Activated CD4-positive, alpha-beta T cell treated with anti-CD3 and anti-CD28 coated beads, Interleukin-2, amount 10 ng/mL, durations not matched to agents 7 days and 5 days (primary cell): ENCODE measurements at regions of chr1 and their contacts with region 1.

Region 1: GRCh38 chr1:168439456-168440375 is 104.1 kb downstream of the XCL2 start:
- DNase-seq: peak; percentile 93
- H3K4me3 Mint-ChIP-seq: peak overlapping the region; percentile 52
- H3K27ac Mint-ChIP-seq: peak overlapping the region; percentile 68
- H3K4me1 Mint-ChIP-seq: peaks cover 62% of the 10 kb centered on the region
- H3K27me3 Mint-ChIP-seq: peaks cover 1% of the 10 kb centered on the region

Region 2: GRCh38 chr1:167881786-167882185 is 557.9 kb before region 1 on chr1:
- CTCF ChIA-PET with region 1: no interaction called
- POLR2A ChIA-PET with region 1: no interaction called
- DNase-seq: no peak
- H3K4me3 Mint-ChIP-seq: no peak overlapping the region
- H3K27ac Mint-ChIP-seq: no peak overlapping the region
- H3K4me1 Mint-ChIP-seq: no peaks in the 10 kb centered on the region
- H3K27me3 Mint-ChIP-seq: no peaks in the 10 kb centered on the region

Region 3: DNA sequence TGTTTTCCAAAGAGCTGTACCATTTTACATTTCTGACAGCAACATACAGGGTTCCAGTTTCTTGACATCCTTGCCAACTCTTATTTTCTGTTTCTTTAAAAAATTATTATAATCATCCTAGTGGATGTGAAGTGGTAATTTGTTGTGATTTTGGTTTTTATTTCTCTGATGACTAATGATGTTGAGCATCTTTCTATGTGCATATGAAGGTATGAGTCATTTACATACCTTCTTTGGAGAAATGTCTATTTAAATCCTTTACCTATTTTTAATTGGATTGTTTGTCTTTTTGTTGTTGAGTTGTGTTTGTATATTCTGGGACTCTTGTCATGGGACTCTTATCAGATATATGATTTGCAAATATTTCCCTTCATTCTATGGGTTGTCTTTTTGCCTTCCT is 482.0 kb before region 1 on chr1:
- CTCF ChIA-PET with region 1: no interaction called
- POLR2A ChIA-PET with region 1: no interaction called
- DNase-seq: no peak
- H3K4me3 Mint-ChIP-seq: no peak overlapping the region
- H3K27ac Mint-ChIP-seq: no peak overlapping the region
- H3K4me1 Mint-ChIP-seq: no peaks in the 10 kb centered on the region
- H3K27me3 Mint-ChIP-seq: no peaks in the 10 kb centered on the region

Region 4: GRCh38 chr1:168421399-168422004 is 18.2 kb before region 1 on chr1:
- CTCF ChIA-PET with region 1: interaction called, 11 read pairs
- POLR2A ChIA-PET with region 1: no interaction called
- DNase-seq: peak; percentile 42
- H3K4me3 Mint-ChIP-seq: no peak overlapping the region
- H3K27ac Mint-ChIP-seq: peak overlapping the region; percentile 84
- H3K4me1 Mint-ChIP-seq: peaks cover 22% of the 10 kb centered on the region
- H3K27me3 Mint-ChIP-seq: no peaks in the 10 kb centered on the region

Region 5: DNA sequence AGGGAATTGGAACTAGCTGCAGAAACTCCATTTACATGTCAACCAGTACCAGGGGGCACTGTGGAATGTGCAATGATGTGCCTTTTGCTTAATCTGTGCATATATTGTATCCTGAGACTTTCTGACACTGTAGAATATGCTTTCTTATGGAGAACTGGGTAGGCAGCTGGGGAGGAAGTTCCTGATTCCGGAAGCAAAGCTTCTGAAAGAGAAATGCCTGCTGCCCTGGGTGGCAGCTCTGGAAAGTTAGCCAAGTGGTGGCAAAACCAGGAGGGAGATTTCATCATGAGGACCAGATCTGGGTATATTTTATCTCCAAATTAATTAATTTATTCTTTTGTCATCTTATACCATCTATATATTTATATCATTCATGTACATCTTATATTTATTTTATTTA is 12.7 kb before region 1 on chr1:
- CTCF ChIA-PET with region 1: interaction called, 11 read pairs
- POLR2A ChIA-PET with region 1: no interaction called
- DNase-seq: no peak
- H3K4me3 Mint-ChIP-seq: no peak overlapping the region
- H3K27ac Mint-ChIP-seq: no peak overlapping the region
- H3K4me1 Mint-ChIP-seq: peaks cover 8% of the 10 kb centered on the region
- H3K27me3 Mint-ChIP-seq: peaks cover 3% of the 10 kb centered on the region

Region 6: DNA sequence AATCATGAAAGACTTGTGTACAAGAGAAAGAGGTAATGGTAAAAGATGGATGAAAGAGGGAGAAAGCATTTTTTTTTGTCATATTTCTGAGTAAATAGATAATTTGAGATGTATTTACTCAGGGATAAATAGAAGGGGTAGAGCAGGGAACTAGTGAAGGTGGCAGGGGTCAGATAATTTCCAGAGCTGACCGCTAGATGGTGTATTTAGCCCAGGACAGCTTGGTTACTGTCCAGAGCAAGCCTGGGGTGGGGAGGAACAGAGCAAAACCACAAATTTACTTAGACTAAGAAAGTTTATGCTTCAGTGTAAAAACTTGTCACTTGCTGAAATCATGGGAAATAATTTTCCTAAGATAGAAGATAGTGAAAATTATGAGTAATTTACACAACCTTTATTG is 12.6 kb after region 1 on chr1:
- CTCF ChIA-PET with region 1: interaction called, 11 read pairs
- POLR2A ChIA-PET with region 1: no interaction called
- DNase-seq: no peak
- H3K4me3 Mint-ChIP-seq: no peak overlapping the region
- H3K27ac Mint-ChIP-seq: no peak overlapping the region
- H3K4me1 Mint-ChIP-seq: peaks cover 26% of the 10 kb centered on the region
- H3K27me3 Mint-ChIP-seq: no peaks in the 10 kb centered on the region

Region 7: GRCh38 chr1:168469690-168470089 is 30.0 kb after region 1 on chr1:
- CTCF ChIA-PET with region 1: interaction called, 11 read pairs
- POLR2A ChIA-PET with region 1: no interaction called
- DNase-seq: peak; percentile 29
- H3K4me3 Mint-ChIP-seq: no peak overlapping the region
- H3K27ac Mint-ChIP-seq: no peak overlapping the region
- H3K4me1 Mint-ChIP-seq: peaks cover 63% of the 10 kb centered on the region
- H3K27me3 Mint-ChIP-seq: no peaks in the 10 kb centered on the region

Region 8: DNA sequence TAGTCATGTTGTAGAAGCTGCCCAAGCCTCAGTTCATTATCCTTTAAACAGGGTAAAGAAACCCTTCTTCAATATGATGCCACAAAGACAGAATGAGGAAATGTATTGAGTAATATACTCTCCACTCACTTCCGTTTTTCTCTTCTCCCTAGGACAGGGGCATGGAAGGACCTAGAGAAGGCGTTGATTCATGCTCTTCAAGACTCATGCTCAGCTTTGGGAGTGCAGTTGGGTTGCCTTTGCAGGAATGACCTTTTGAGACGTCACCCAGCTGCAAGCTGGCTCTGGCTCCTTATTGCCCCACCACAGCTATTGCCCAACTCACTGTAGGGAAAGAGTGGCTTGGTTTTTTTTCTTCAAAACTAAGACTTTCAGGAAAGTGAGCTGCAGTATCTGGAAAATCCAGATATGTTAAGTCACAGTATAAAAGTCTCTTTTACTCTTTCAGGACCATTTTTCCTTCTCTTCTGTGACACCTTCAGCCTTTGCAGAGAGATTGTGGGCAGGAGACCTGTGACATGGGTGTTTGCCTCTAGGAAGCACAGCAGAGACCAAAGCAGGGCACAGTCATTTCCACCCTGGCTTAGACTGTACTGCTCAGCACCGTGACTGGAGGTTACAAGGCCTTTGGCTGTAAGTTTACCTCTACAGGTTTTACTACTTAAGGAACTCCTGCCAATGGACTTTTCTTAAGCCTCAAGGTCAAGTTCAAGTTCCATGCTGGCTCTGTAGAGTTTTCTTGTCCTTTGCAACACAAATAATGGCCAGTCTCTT is 64.5 kb after region 1 on chr1:
- CTCF ChIA-PET with region 1: no interaction called
- POLR2A ChIA-PET with region 1: no interaction called
- DNase-seq: peak; percentile 41
- H3K4me3 Mint-ChIP-seq: no peak overlapping the region
- H3K27ac Mint-ChIP-seq: peak overlapping the region; percentile 10
- H3K4me1 Mint-ChIP-seq: peaks cover 63% of the 10 kb centered on the region
- H3K27me3 Mint-ChIP-seq: no peaks in the 10 kb centered on the region